ENCODE measurements at regions of chr15 and their contacts with region 1.

Region 1: GRCh38 chr15:49174902-49175301 is 4.9 kb downstream of the GALK2 start:
- DNase-seq: no peak
- H3K4me3 ChIP-seq: no peak overlapping the region
- CTCF ChIP-seq: no peak
- POLR2A ChIP-seq: no peak

Region 2: GRCh38 chr15:48963524-48964113 is 211.3 kb before region 1 on chr15 and contains the start of gene SHC4:
- intact Hi-C with region 1: no loop called
- DNase-seq: peak in 1 of 2 donors; percentile 92
- H3K4me3 ChIP-seq: peak within 1 kb of the TSS; percentile 21
- CTCF ChIP-seq: no peak
- POLR2A ChIP-seq: no peak
- total RNA-seq, gene SHC4: 0.63 to 4.7 (median 1.6) TPM

Region 3: GRCh38 chr15:49060710-49061505 is 114.0 kb before region 1 on chr15:
- intact Hi-C with region 1: no loop called
- DNase-seq: no peak
- H3K4me3 ChIP-seq: no peak overlapping the region
- CTCF ChIP-seq: no peak
- POLR2A ChIP-seq: no peak

Region 4: GRCh38 chr15:49121901-49122300 is 53.0 kb before region 1 on chr15:
- intact Hi-C with region 1: loop called (anchors 2 kb)
- DNase-seq: no peak
- H3K4me3 ChIP-seq: no peak overlapping the region
- CTCF ChIP-seq: no peak
- POLR2A ChIP-seq: no peak